WTC11 (cell line): ENCODE measurements at regions of chr1 and their contacts with region 1.

Region 1: GRCh38 chr1:36342481-36343478 is 19.3 kb upstream of the EVA1B start:
- DNase-seq: peak; percentile 73
- ATAC-seq: peak; percentile 85
- H3K4me3 Mint-ChIP-seq: no peak overlapping the region
- H3K27ac Mint-ChIP-seq: no peak overlapping the region
- H3K4me1 Mint-ChIP-seq: no peaks in the 10 kb centered on the region
- H3K27me3 Mint-ChIP-seq: no peaks in the 10 kb centered on the region
- CTCF ChIP-seq: peak; percentile 25; the same call in 1 of the 2 replicates

Region 2: GRCh38 chr1:36306902-36307456 is 35.8 kb before region 1 on chr1:
- CTCF ChIA-PET with region 1: interaction called, 23 read pairs
- POLR2A ChIA-PET with region 1: interaction called, 3 read pairs
- DNase-seq: peak; percentile 98
- ATAC-seq: peak; percentile 95
- H3K4me3 Mint-ChIP-seq: peak overlapping the region; percentile 99
- H3K27ac Mint-ChIP-seq: peak overlapping the region; percentile 94; the same call in 1 of the 2 replicates
- H3K4me1 Mint-ChIP-seq: peaks cover 17% of the 10 kb centered on the region
- H3K27me3 Mint-ChIP-seq: no peaks in the 10 kb centered on the region
- CTCF ChIP-seq: no peak

Region 3: GRCh38 chr1:36359911-36360550 is 17.3 kb after region 1 on chr1:
- CTCF ChIA-PET with region 1: interaction called, 11 read pairs
- POLR2A ChIA-PET with region 1: no interaction called
- DNase-seq: no peak
- ATAC-seq: no peak
- H3K4me3 Mint-ChIP-seq: no peak overlapping the region
- H3K27ac Mint-ChIP-seq: no peak overlapping the region; the same call in 1 of the 2 replicates
- H3K4me1 Mint-ChIP-seq: no peaks in the 10 kb centered on the region
- H3K27me3 Mint-ChIP-seq: no peaks in the 10 kb centered on the region
- CTCF ChIP-seq: no peak

Region 4: DNA sequence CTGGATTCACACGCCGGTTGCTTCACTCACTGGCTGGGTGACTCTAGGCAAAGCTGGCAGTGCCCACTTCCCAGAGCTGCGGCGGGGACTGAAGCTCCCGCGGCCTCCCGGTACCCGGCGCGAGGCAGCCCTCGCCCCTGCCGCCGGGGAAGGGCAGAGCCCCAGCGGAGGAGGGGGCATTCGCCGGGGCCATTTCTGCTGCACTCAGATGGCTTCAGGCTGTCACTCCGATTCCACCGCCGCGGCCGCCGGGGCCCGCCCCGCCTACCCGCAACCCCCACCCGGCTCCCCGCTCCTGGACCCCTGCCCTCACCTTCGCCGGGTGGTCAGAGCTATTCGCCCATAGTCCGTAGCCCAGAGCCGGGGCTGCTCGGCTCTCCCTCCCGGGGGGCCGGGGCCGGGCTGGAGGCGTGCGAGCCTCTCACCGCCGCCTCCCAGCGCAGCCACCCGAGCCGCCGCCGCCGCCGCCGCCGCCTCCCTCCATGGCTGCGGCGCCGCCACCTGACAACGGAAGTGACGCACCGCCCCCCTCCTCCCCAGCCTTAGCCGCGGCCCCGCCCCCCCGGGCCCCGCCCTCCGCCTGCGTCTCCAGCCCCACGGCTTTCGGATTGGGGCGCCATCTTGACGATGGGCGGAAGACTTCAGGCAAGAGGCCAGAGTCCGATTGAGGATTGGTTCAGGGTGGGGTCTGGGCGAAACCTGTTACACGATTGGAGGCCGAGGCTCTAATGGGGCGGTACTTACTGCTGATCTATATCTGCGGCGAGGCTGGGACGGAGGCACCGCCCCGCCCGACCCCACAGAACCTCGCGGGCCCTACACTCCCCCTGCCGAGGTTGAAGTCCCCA is 42.9 kb after region 1 on chr1 and contains the start of gene STK40:
- CTCF ChIA-PET with region 1: interaction called, 15 read pairs
- POLR2A ChIA-PET with region 1: no interaction called
- DNase-seq: peak; percentile 97
- ATAC-seq: peak; percentile 96
- H3K4me3 Mint-ChIP-seq: peak within 1 kb of the TSS; percentile 94
- H3K27ac Mint-ChIP-seq: peak within 1 kb of the TSS; percentile 99
- H3K4me1 Mint-ChIP-seq: peaks cover 31% of the 10 kb centered on the region
- H3K27me3 Mint-ChIP-seq: no peaks in the 10 kb centered on the region
- CTCF ChIP-seq: no peak
- total RNA-seq, gene STK40: 17.8 to 24.7 TPM (median 20.4 TPM) in 3 replicates

Region 5: GRCh38 chr1:36450270-36450918 is 107.6 kb after region 1 on chr1 and contains the start of gene OSCP1:
- CTCF ChIA-PET with region 1: interaction called, 15 read pairs
- POLR2A ChIA-PET with region 1: no interaction called
- DNase-seq: peak; percentile 93
- ATAC-seq: peak; percentile 95
- H3K4me3 Mint-ChIP-seq: peak within 1 kb of the TSS; percentile 77
- H3K27ac Mint-ChIP-seq: peak within 1 kb of the TSS; percentile 58; the same call in 1 of the 2 replicates
- H3K4me1 Mint-ChIP-seq: peaks cover 18% of the 10 kb centered on the region
- H3K27me3 Mint-ChIP-seq: peaks cover 4% of the 10 kb centered on the region
- CTCF ChIP-seq: no peak
- total RNA-seq, gene OSCP1: 1.7 to 2.3 TPM (median 2.0 TPM) in 3 replicates